ENCODE measurements at regions of chr4 and their contacts with region 1.

Region 1: GRCh38 chr4:40149960-40150385 is 46.9 kb upstream of the RHOH start:
- DNase-seq: peak in 1 of 2 donors; percentile 64
- ATAC-seq: peak in 7 of 8 donors; percentile 57 to 77 (median 67)
- H3K4me3 ChIP-seq: no peak overlapping the region
- H3K27ac ChIP-seq: no peak overlapping the region
- H3K4me1 ChIP-seq: no peaks in the 10 kb centered on the region
- H3K27me3 ChIP-seq: no peaks in the 10 kb centered on the region
- CTCF ChIP-seq: peak; percentile 77 to 89 (median 84)

Region 2: DNA sequence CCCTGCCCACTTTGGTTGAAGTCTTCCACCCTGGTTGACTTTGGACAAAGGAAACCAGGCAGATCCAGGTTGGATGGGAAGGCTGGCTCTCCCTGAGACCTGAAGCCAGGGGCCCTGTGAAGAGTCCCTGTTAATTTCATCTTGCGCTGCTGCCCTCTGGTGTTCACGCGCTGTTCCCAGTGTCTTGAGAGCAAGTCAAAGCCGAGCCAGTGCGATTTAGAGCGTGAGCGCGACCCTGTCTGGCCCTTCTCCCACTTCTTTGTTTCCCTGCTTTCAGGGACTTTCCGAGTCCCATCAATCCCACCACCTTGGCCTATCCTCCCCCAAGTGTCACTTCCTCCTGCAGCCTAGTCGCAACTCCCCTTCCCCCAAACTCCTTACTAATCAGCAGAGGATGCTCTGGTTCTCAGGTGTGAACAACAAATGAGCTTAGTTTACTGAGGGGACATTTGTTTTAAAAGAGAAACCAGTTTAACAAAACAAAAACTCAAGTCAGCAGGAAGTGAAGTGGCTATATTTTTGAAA is 159.3 kb after region 1 on chr4:
- intact Hi-C with region 1: loop called (anchors 1 to 5 kb)
- DNase-seq: peak; percentile 86 to 88
- ATAC-seq: peak; percentile 80 to 92 (median 89)
- H3K4me3 ChIP-seq: peak overlapping the region in 1 of 10 donors; percentile 16
- H3K27ac ChIP-seq: peak overlapping the region in 1 of 10 donors; percentile 84
- H3K4me1 ChIP-seq: peaks cover 0 to 57% (median 0%) of the 10 kb centered on the region in 9 donors
- H3K27me3 ChIP-seq: peaks cover 0 to 9% (median 0%) of the 10 kb centered on the region in 7 donors
- CTCF ChIP-seq: peak; percentile 59 to 95 (median 91)

Measured in heart right ventricle (tissue), 16 donors.